Activated CD8-positive, alpha-beta T cell treated with anti-CD3 and anti-CD28 coated beads for 36 hours (primary cell): ENCODE measurements at regions of chrX and their contacts with region 1.

Region 1: GRCh38 chrX:23907498-23908218 is at the starts of genes APOO and CXorf58:
- DNase-seq: peak; percentile 92
- ATAC-seq: peak; percentile 92
- H3K4me3 Mint-ChIP-seq: peak within 1 kb of the TSS; percentile 78
- H3K27ac Mint-ChIP-seq: peak within 1 kb of the TSS; percentile 91
- H3K4me1 Mint-ChIP-seq: peaks cover 19% of the 10 kb centered on the region
- H3K27me3 Mint-ChIP-seq: no peaks in the 10 kb centered on the region
- CTCF ChIP-seq: peak; percentile 58
- total RNA-seq, gene APOO: 34.1 to 35.7 TPM
- total RNA-seq, gene CXorf58: 0.14 TPM in 1 of 2 experiments, not detected in the other

Region 2: DNA sequence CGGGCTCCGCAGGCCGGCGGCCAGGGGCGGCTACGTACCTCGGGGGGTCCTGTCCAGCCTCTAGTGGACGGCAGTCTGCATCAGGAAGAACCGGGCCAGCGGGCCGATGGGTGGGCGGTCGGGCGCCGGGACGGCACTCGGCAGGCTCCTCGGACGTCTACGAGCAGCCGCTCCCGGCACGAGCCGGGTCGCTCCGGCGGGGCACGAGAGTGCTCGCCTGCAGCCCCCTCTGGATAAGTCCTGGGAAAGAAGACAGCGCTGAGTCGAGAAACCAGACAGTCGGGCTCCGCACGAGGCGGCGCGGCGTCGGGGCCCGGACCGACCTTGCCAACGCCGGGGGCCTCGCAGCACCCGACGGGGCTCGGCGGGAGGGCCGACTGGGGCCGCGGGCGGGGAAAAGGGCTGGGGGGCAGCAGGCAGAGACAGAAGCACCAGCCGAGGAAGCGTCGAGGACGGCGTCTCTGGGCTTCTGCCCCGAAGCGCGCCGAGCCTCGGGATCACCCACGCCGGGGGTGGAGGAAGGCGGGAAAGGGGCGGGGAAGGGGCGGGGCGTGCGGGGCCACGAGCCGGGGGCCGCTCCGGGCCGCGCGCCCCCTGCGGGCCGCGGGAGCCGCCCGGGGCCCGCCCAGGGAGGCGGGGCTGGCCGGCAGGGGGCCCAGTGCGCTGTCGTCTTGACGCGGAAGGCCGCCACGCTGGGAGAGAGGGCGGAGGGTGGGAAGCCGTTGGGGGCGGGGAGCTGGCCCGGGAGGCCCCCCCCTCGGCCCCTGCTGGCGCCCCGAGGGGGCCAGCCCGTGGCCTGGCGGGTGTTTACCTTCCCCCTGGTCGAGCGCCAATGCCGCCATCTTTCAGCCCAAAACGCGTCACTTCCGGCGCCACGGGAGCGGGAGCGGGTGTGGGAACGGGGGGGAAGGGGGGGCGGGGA is 117.4 kb after region 1 on chrX:
- CTCF ChIA-PET with region 1: interaction called, 5 read pairs
- POLR2A ChIA-PET with region 1: interaction called, 4 read pairs
- intact Hi-C with region 1: loop called (anchors 10 kb)
- DNase-seq: peak; percentile 86
- ATAC-seq: peak; percentile 93
- H3K4me3 Mint-ChIP-seq: peak overlapping the region; percentile 82
- H3K27ac Mint-ChIP-seq: peak overlapping the region; percentile 80
- H3K4me1 Mint-ChIP-seq: peaks cover 21% of the 10 kb centered on the region
- H3K27me3 Mint-ChIP-seq: no peaks in the 10 kb centered on the region
- CTCF ChIP-seq: no peak